Activated CD4-positive, alpha-beta T cell treated with anti-CD3 and anti-CD28 coated beads for 36 hours (primary cell): ENCODE measurements at regions of chr9 and their contacts with region 1.

Region 1: GRCh38 chr9:120928483-120929228 is 2.1 kb upstream of the TRAF1 start:
- DNase-seq: peak; percentile 85
- ATAC-seq: peak; percentile 16
- H3K4me3 Mint-ChIP-seq: peak overlapping the region; percentile 90
- H3K27ac Mint-ChIP-seq: peak overlapping the region; percentile 90
- H3K4me1 Mint-ChIP-seq: peaks cover 75% of the 10 kb centered on the region
- H3K27me3 Mint-ChIP-seq: no peaks in the 10 kb centered on the region

Region 2: DNA sequence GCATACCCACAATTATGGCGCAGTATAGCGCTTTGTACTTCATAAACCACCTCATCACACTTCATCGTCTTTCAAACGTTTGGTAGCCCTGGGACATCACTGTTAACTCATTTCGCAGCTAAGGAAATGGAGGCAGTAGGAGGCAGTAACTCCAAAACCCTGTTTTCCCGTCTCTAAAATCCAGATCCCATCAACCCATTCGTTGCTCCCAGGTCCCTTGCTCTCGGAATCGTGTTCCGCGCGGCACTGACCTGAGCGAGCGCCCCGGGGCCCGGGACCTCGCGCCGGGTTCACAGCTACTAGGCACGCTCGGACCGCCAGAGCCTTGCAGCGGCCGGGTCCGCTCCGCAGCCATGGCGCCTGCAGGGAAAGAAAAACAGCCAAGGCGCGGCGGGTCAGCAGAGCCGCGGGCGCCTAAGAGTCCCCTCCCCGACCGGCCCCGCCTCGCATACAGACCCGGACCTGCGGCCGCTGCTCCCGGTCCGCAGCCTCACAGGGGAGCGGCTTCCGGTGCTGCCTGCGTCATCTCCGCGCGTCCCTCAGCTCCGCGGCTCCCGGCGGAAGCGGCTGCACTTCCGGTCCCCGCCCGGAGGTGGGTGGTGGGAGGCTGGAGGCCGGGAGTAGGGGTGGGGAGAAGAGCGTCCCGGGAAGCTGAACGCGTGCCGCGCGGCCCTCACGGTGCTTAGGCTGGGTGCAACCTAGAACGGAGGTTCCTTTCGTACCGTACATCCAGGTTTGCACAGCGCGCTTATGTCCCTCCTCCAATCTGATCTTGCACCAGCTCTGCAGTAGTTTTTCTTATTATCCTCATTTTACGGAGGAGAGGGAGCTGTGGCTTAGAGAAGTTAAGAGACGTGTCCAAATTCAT is 135.5 kb before region 1 on chr9 and contains the start of gene FBXW2:
- CTCF ChIA-PET with region 1: no interaction called
- POLR2A ChIA-PET with region 1: no interaction called
- intact Hi-C with region 1: loop called in 1 of 2 experiments (anchors 1 kb)
- DNase-seq: peak; percentile 95
- ATAC-seq: peak; percentile 92
- H3K4me3 Mint-ChIP-seq: peak within 1 kb of the TSS; percentile 93
- H3K27ac Mint-ChIP-seq: peak within 1 kb of the TSS; percentile 97
- H3K4me1 Mint-ChIP-seq: peaks cover 43% of the 10 kb centered on the region
- H3K27me3 Mint-ChIP-seq: no peaks in the 10 kb centered on the region
- total RNA-seq, gene FBXW2: 53.0 to 68.1 TPM

Region 3: GRCh38 chr9:120875954-120876841 is 52.5 kb before region 1 on chr9:
- CTCF ChIA-PET with region 1: interaction called, 4 read pairs
- POLR2A ChIA-PET with region 1: interaction called, 9 read pairs
- intact Hi-C with region 1: loop called (anchors 1 kb)
- DNase-seq: peak; percentile 95
- ATAC-seq: peak; percentile 59
- H3K4me3 Mint-ChIP-seq: peak overlapping the region; percentile 85
- H3K27ac Mint-ChIP-seq: peak overlapping the region; percentile 94
- H3K4me1 Mint-ChIP-seq: peaks cover 73% of the 10 kb centered on the region
- H3K27me3 Mint-ChIP-seq: no peaks in the 10 kb centered on the region

Region 4: GRCh38 chr9:120904061-120904977 is 24.3 kb before region 1 on chr9:
- CTCF ChIA-PET with region 1: interaction called, 3 read pairs
- POLR2A ChIA-PET with region 1: interaction called, 13 read pairs
- intact Hi-C with region 1: no loop called
- DNase-seq: peak; percentile 69
- ATAC-seq: peak; percentile 21
- H3K4me3 Mint-ChIP-seq: peak overlapping the region; percentile 9
- H3K27ac Mint-ChIP-seq: peak overlapping the region; percentile 86
- H3K4me1 Mint-ChIP-seq: peaks cover 90% of the 10 kb centered on the region
- H3K27me3 Mint-ChIP-seq: no peaks in the 10 kb centered on the region

Region 5: GRCh38 chr9:120916588-120916987 is 12.1 kb before region 1 on chr9:
- CTCF ChIA-PET with region 1: interaction called, 13 read pairs
- POLR2A ChIA-PET with region 1: interaction called, 9 read pairs
- intact Hi-C with region 1: loop called in 1 of 2 experiments (anchors 1 kb)
- DNase-seq: peak; percentile 8
- ATAC-seq: no peak
- H3K4me3 Mint-ChIP-seq: peak overlapping the region; percentile 34
- H3K27ac Mint-ChIP-seq: peak overlapping the region; percentile 67
- H3K4me1 Mint-ChIP-seq: peaks cover 87% of the 10 kb centered on the region
- H3K27me3 Mint-ChIP-seq: no peaks in the 10 kb centered on the region

Region 6: DNA sequence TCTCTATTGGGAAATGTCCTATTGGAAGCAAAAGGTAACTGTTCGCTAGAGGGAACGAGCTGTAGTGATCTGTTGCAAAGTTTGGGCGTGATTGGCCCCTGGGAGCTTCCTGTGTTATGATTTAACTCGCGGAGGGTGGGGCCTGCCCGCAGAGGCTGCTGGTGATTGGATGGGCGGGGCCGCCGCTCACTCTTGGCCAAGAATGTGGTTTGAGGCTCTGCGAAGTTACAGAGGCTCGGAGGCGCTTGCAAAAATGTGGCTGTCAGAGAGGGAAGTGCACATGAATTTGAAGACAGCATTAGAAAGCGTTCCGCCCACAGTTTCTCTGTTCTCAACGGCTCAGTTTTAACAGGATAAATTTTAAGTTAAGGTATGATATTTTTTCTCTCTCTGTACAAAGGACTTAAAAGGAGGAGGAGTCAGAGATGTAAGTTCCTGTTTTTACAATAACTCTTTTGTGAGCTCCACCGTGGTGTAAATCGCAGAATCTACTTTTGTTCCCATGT is 193.0 kb after region 1 on chr9:
- CTCF ChIA-PET with region 1: no interaction called
- POLR2A ChIA-PET with region 1: interaction called, 8 read pairs
- intact Hi-C with region 1: loop called in 1 of 2 experiments (anchors 1 kb)
- DNase-seq: peak; percentile 98
- ATAC-seq: peak; percentile 99
- H3K4me3 Mint-ChIP-seq: peak overlapping the region; percentile 79
- H3K27ac Mint-ChIP-seq: peak overlapping the region; percentile 90
- H3K4me1 Mint-ChIP-seq: peaks cover 51% of the 10 kb centered on the region
- H3K27me3 Mint-ChIP-seq: no peaks in the 10 kb centered on the region